Activated naive CD4-positive, alpha-beta T cell treated with anti-CD3 and anti-CD28 coated beads, Interleukin-2, amount 10 ng/mL, durations not matched to agents 7 days and 5 days (primary cell): ENCODE measurements at regions of chr11 and their contacts with region 1.

Region 1: DNA sequence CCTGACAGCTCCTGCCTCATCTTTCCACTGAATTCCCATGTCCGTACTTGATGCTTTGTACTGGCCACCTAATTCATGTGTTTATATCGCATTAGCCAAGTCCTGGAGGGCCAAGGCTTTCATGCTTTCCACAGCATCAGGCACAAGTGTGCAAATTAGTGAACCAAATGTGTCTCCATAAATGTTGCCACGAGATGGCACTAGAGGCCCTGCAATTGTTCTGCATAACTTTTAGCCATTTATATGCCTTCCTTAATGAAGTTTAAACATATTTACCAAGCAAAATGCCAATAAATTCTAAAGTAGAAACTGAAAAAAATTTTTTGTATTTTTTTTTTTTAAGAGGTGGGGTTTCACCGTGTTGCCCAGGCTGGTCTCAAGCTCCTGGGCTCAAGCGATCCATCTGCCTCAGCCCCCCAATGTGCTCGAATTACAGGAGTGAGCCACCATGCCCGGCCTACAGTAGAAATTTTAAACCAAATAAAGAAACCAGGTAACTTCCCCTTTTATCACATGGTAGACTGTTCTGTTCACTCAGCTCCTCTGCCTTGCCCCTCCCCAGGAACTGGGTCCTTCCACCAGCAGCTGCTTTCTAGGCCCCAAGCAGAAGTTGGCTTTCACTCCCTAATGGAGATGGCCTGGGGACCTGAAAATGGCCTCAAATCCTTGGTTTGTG is 20.8 kb upstream of the IL18BP start:
- DNase-seq: peak; percentile 72
- H3K4me3 Mint-ChIP-seq: no peak overlapping the region
- H3K27ac Mint-ChIP-seq: no peak overlapping the region
- H3K4me1 Mint-ChIP-seq: no peaks in the 10 kb centered on the region
- H3K27me3 Mint-ChIP-seq: no peaks in the 10 kb centered on the region

Region 2: GRCh38 chr11:71964641-71965040 is 13.2 kb before region 1 on chr11:
- CTCF ChIA-PET with region 1: interaction called, 18 read pairs
- DNase-seq: no peak
- H3K4me3 Mint-ChIP-seq: no peak overlapping the region
- H3K27ac Mint-ChIP-seq: peak overlapping the region; percentile 49
- H3K4me1 Mint-ChIP-seq: peaks cover 5% of the 10 kb centered on the region
- H3K27me3 Mint-ChIP-seq: no peaks in the 10 kb centered on the region

Region 3: GRCh38 chr11:71998662-71999310 is 20.9 kb after region 1 on chr11 and contains the start of gene IL18BP:
- CTCF ChIA-PET with region 1: interaction called, 10 read pairs
- DNase-seq: peak; percentile 65
- H3K4me3 Mint-ChIP-seq: peak within 1 kb of the TSS; percentile 77
- H3K27ac Mint-ChIP-seq: peak within 1 kb of the TSS; percentile 91
- H3K4me1 Mint-ChIP-seq: peaks cover 27% of the 10 kb centered on the region
- H3K27me3 Mint-ChIP-seq: no peaks in the 10 kb centered on the region

Region 4: GRCh38 chr11:72030472-72031045 is 52.7 kb after region 1 on chr11:
- CTCF ChIA-PET with region 1: interaction called, 19 read pairs
- DNase-seq: no peak
- H3K4me3 Mint-ChIP-seq: no peak overlapping the region
- H3K27ac Mint-ChIP-seq: no peak overlapping the region
- H3K4me1 Mint-ChIP-seq: peaks cover 20% of the 10 kb centered on the region
- H3K27me3 Mint-ChIP-seq: no peaks in the 10 kb centered on the region

Region 5: GRCh38 chr11:72091005-72091691 is 113.3 kb after region 1 on chr11:
- CTCF ChIA-PET with region 1: interaction called, 24 read pairs
- DNase-seq: peak; percentile 82
- H3K4me3 Mint-ChIP-seq: no peak overlapping the region
- H3K27ac Mint-ChIP-seq: peak overlapping the region; percentile 38
- H3K4me1 Mint-ChIP-seq: peaks cover 7% of the 10 kb centered on the region
- H3K27me3 Mint-ChIP-seq: no peaks in the 10 kb centered on the region

Region 6: GRCh38 chr11:72119198-72119597 is 141.3 kb after region 1 on chr11:
- CTCF ChIA-PET with region 1: no interaction called
- DNase-seq: no peak
- H3K4me3 Mint-ChIP-seq: no peak overlapping the region
- H3K27ac Mint-ChIP-seq: no peak overlapping the region
- H3K4me1 Mint-ChIP-seq: no peaks in the 10 kb centered on the region
- H3K27me3 Mint-ChIP-seq: peaks cover 15% of the 10 kb centered on the region

Region 7: DNA sequence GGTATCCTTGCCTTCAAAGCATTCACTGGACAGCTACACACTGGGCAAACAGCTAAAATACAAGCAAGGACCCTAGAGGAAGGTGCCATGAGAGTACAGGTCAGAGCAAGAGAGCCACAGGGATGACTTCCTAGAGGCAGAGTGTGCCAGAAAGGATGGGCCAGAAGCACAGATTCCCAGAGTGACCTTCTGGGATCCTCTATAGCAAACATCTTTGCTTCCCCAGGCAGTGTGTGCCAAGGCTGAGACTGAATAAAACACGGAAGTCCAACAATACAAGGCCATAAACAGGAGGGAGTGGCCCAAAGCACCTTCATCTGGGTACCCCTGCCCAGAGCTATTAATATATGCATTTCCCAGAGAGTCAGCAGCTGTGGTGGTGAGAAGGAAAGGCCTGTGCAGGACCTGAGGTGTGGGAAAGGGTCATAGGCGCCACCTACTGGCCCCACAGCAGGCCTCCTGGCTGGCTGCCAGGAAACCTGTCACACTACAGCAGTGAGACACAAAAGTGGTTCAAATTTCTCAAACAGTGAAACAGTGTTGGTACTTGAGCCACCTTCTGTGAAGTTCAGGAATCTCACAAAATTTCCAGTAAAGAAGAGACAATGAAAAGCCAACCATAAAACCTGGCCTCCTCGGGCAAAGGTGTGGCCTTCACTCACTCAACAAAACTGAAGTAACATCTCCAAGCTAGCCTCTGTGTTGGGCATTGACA is 436.2 kb after region 1 on chr11:
- CTCF ChIA-PET with region 1: interaction called, 10 read pairs
- DNase-seq: peak; percentile 82
- H3K4me3 Mint-ChIP-seq: no peak overlapping the region
- H3K27ac Mint-ChIP-seq: no peak overlapping the region
- H3K4me1 Mint-ChIP-seq: peaks cover 29% of the 10 kb centered on the region
- H3K27me3 Mint-ChIP-seq: no peaks in the 10 kb centered on the region